Mammary epithelial cell (primary cell): ENCODE measurements at regions of chr6 and their contacts with region 1.

Region 1: GRCh38 chr6:31158140-31158862 is at the start of gene TCF19:
- DNase-seq: peak; percentile 99
- H3K4me3 ChIP-seq: peak within 1 kb of the TSS; percentile 76 to 86 (median 78)
- H3K27ac ChIP-seq: peak within 1 kb of the TSS; percentile 69
- H3K4me1 ChIP-seq: peaks cover 13% of the 10 kb centered on the region
- H3K27me3 ChIP-seq: no peaks in the 10 kb centered on the region
- CTCF ChIP-seq: no peak
- total RNA-seq, gene TCF19: 5.5 to 29.7 TPM

Region 2: GRCh38 chr6:31186052-31186734 is 27.9 kb after region 1 on chr6:
- CTCF ChIA-PET with region 1: no interaction called
- dilution Hi-C with region 1: no loop called
- in situ Hi-C with region 1: no loop called
- intact Hi-C with region 1: loop called (anchors 1 kb)
- DNase-seq: peak; percentile 77
- H3K4me3 ChIP-seq: peak overlapping the region; percentile 50 to 63 (median 60)
- H3K27ac ChIP-seq: peak overlapping the region; percentile 98
- H3K4me1 ChIP-seq: peaks cover 8% of the 10 kb centered on the region
- H3K27me3 ChIP-seq: no peaks in the 10 kb centered on the region
- CTCF ChIP-seq: no peak